MCF 10A (cell line): ENCODE measurements at regions of chr17 and their contacts with region 1.

Region 1: DNA sequence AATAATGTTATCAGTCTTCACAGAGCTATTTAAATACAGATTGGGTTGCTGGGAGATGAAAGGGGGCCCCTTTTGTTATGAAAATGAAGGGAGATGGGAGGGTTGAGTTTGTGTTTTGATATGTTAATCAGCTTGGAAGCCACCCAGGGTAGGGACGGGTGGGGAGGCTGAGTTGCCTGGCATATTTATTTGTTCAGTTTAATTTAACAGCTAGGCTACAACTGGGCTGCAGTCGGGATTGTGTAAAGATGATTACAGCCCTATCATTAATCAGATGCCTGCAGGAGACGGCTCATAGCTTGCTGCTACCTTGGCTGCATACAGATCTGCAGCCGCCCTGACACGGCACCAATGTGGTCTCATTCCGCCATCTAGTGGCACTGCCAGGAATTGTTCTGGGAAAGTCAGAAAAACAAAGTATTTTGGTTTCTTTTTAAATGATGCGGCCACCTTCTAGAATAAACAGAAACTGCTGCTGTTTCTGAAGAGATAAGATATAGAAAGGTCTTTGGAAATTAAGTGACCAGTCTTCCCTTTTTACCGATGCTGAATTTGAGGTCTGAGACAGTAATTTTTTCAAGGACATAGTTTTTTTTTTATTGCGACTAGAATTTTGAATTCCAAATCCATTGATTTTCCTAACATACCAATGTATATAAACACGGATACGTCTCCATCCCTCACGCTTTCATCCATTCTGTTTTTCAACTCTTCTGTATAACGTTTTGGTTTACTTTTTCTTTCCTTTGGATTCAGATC is 458.0 kb upstream of the ASIC2 start:
- DNase-seq: peak; percentile 52
- H3K4me3 Mint-ChIP-seq: peak overlapping the region; percentile 47
- H3K27ac Mint-ChIP-seq: no peak overlapping the region
- H3K4me1 Mint-ChIP-seq: no peaks in the 10 kb centered on the region
- H3K27me3 Mint-ChIP-seq: no peaks in the 10 kb centered on the region
- CTCF ChIP-seq: peak; percentile 95

Region 2: GRCh38 chr17:32461853-32462617 is 1289.1 kb before region 1 on chr17:
- CTCF ChIA-PET with region 1: interaction called, 26 read pairs
- POLR2A ChIA-PET with region 1: no interaction called
- intact Hi-C with region 1: no loop called
- DNase-seq: peak; percentile 78
- H3K4me3 Mint-ChIP-seq: no peak overlapping the region
- H3K27ac Mint-ChIP-seq: no peak overlapping the region
- H3K4me1 Mint-ChIP-seq: peaks cover 6% of the 10 kb centered on the region
- H3K27me3 Mint-ChIP-seq: no peaks in the 10 kb centered on the region
- CTCF ChIP-seq: peak; percentile 53

Region 3: DNA sequence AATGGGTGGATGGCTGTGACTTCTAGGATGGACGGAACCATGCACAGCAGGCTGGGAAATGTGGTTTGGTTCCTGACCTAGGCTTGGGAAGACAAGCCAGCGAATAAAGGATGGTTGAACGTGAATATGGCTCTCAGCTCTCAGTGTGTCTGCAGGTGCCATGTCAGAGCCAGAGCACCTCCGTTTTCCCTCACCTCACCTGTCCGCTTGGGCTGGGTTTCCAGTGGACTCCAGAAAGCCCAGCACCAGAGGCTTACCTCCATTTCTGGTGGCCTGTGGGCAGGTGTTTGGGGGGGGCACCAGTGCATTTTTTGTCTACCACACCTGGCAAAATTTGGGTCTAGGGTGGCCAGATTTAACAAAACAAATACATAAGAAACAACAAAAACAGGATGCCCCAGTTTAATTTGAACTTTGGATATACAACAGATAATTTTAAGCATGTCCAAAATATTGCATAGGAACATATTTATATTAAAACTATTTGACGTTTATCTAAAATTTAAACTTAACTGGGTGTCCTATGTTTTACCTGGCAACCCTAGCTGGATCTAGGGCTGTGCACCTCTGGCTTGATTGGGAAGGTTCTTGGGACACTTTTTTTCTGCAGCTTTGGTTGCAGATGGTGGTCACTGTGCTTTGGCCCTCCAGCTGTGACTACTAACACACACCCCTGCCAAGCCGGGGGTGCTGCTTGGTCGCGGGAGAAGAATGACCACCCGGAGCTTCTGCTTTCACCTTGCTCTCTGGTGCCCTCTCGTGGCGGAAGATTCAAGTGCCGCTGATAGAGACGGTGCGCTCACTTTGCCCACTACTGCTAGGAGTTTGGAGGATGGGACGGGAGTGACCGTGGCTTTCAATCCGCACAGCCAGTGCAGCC is 753.1 kb before region 1 on chr17:
- CTCF ChIA-PET with region 1: interaction called, 14 read pairs
- POLR2A ChIA-PET with region 1: no interaction called
- intact Hi-C with region 1: loop called (anchors 1 kb)
- DNase-seq: peak; percentile 79
- H3K4me3 Mint-ChIP-seq: peak overlapping the region; percentile 61
- H3K27ac Mint-ChIP-seq: no peak overlapping the region
- H3K4me1 Mint-ChIP-seq: peaks cover 7% of the 10 kb centered on the region
- H3K27me3 Mint-ChIP-seq: no peaks in the 10 kb centered on the region
- CTCF ChIP-seq: peak; percentile 87

Region 4: GRCh38 chr17:33615861-33616260 is 135.3 kb before region 1 on chr17:
- CTCF ChIA-PET with region 1: no interaction called
- POLR2A ChIA-PET with region 1: no interaction called
- intact Hi-C with region 1: no loop called
- DNase-seq: no peak
- H3K4me3 Mint-ChIP-seq: no peak overlapping the region
- H3K27ac Mint-ChIP-seq: no peak overlapping the region
- H3K4me1 Mint-ChIP-seq: no peaks in the 10 kb centered on the region
- H3K27me3 Mint-ChIP-seq: no peaks in the 10 kb centered on the region
- CTCF ChIP-seq: no peak

Region 5: DNA sequence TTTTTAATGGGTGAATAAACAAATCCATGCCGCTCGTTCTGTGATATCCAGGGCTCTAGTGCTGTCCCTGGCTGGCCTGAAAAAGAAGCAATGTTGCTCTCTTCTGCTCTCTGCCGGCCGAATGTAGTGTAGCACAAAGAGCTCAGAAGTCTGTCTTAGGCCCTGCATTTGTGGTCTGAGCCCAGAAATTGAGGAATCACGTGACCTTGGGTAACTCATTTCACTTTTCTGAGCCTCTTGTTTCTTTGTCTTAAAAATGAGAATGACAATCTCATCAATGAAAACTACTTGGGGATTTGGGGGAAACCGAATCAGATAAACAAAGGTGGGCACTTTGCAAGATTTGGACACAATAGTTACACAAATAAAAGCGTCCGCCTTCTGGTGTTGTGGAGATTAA is 76.4 kb before region 1 on chr17:
- CTCF ChIA-PET with region 1: interaction called, 10 read pairs
- POLR2A ChIA-PET with region 1: no interaction called
- intact Hi-C with region 1: loop called (anchors 2 kb)
- DNase-seq: peak; percentile 33
- H3K4me3 Mint-ChIP-seq: no peak overlapping the region
- H3K27ac Mint-ChIP-seq: no peak overlapping the region
- H3K4me1 Mint-ChIP-seq: no peaks in the 10 kb centered on the region
- H3K27me3 Mint-ChIP-seq: no peaks in the 10 kb centered on the region
- CTCF ChIP-seq: peak; percentile 61

Region 6: DNA sequence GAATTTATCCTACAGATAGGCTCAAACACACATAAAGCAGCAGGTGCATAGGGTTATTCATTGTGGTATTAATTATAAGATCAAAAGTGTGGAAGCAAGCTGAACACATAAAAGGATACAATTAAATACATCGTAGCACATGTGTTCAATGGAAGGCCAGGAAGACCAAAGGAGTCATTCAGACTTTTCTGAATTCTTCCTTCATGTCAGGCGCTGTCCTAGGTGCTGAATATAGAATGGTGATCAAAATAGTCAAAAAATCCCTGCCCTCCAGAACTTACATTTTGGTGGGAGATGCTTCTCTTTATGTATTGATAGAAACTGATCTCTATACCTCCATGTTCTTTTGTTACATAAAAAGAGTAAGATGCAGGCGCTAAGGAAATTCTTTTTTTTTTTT is 19.0 kb before region 1 on chr17:
- CTCF ChIA-PET with region 1: interaction called, 11 read pairs
- POLR2A ChIA-PET with region 1: no interaction called
- intact Hi-C with region 1: no loop called
- DNase-seq: no peak
- H3K4me3 Mint-ChIP-seq: no peak overlapping the region
- H3K27ac Mint-ChIP-seq: no peak overlapping the region
- H3K4me1 Mint-ChIP-seq: no peaks in the 10 kb centered on the region
- H3K27me3 Mint-ChIP-seq: no peaks in the 10 kb centered on the region
- CTCF ChIP-seq: no peak